GM12878 (cell line): ENCODE measurements at regions of chr18 and their contacts with region 1.

Region 1: GRCh38 chr18:31685097-31686082 is 1.0 kb upstream of the B4GALT6 start:
- DNase-seq: peak; percentile 40
- ATAC-seq: peak; percentile 71
- H3K4me3 ChIP-seq: peak overlapping the region; percentile 75
- H3K27ac ChIP-seq: peak overlapping the region; percentile 88
- H3K4me1 ChIP-seq: peaks cover 13% of the 10 kb centered on the region
- H3K27me3 ChIP-seq: no peaks in the 10 kb centered on the region
- CTCF ChIP-seq: peak; percentile 42 to 48 (median 47); a peak in 4 of 6 replicates
- EP300 ChIP-seq: no peak
- POLR2A ChIP-seq: peak; percentile 79
- RAD21 ChIP-seq: 0 out of 2 replicates have a peak, but pooled peaks have one; percentile 15

Region 2: GRCh38 chr18:31490387-31490786 is 195.0 kb before region 1 on chr18:
- CTCF ChIA-PET with region 1: no interaction called
- POLR2A ChIA-PET with region 1: no interaction called
- RAD21 ChIA-PET with region 1: no interaction called
- SMC1A ChIA-PET with region 1: no interaction called
- in situ Hi-C with region 1: no loop called
- intact Hi-C with region 1: no loop called
- DNase-seq: peak; percentile 49
- ATAC-seq: peak; percentile 92
- H3K4me3 ChIP-seq: no peak overlapping the region
- H3K27ac ChIP-seq: peak overlapping the region; percentile 9; the same call in 1 of the 2 replicates
- H3K4me1 ChIP-seq: peaks cover 7% of the 10 kb centered on the region
- H3K27me3 ChIP-seq: no peaks in the 10 kb centered on the region
- CTCF ChIP-seq: no peak
- EP300 ChIP-seq: peak; percentile 69 to 85; a peak in 3 of 4 replicates
- POLR2A ChIP-seq: no peak
- RAD21 ChIP-seq: no peak

Region 3: GRCh38 chr18:31634331-31634713 is 51.1 kb before region 1 on chr18:
- CTCF ChIA-PET with region 1: interaction called, 3 read pairs
- POLR2A ChIA-PET with region 1: interaction called, 4 read pairs
- RAD21 ChIA-PET with region 1: interaction called, 4 read pairs
- SMC1A ChIA-PET with region 1: interaction called, 18 read pairs
- in situ Hi-C with region 1: no loop called
- intact Hi-C with region 1: no loop called
- DNase-seq: peak; percentile 85
- ATAC-seq: peak; percentile 98
- H3K4me3 ChIP-seq: no peak overlapping the region
- H3K27ac ChIP-seq: peak overlapping the region; percentile 70
- H3K4me1 ChIP-seq: peaks cover 35% of the 10 kb centered on the region
- H3K27me3 ChIP-seq: no peaks in the 10 kb centered on the region
- CTCF ChIP-seq: no peak
- EP300 ChIP-seq: peak in 1 of 2 experiments; percentile 51; a peak in 1 of 4 replicates
- POLR2A ChIP-seq: no peak
- RAD21 ChIP-seq: peak; percentile 22; the same call in 1 of the 2 replicates

Region 4: GRCh38 chr18:31667185-31667584 is 18.2 kb before region 1 on chr18:
- CTCF ChIA-PET with region 1: interaction called, 13 read pairs
- POLR2A ChIA-PET with region 1: interaction called, 8 read pairs
- RAD21 ChIA-PET with region 1: interaction called, 4 read pairs
- SMC1A ChIA-PET with region 1: interaction called, 169 read pairs
- in situ Hi-C with region 1: no loop called
- intact Hi-C with region 1: no loop called
- DNase-seq: no peak
- ATAC-seq: no peak
- H3K4me3 ChIP-seq: no peak overlapping the region
- H3K27ac ChIP-seq: no peak overlapping the region
- H3K4me1 ChIP-seq: no peaks in the 10 kb centered on the region
- H3K27me3 ChIP-seq: no peaks in the 10 kb centered on the region
- CTCF ChIP-seq: no peak
- EP300 ChIP-seq: no peak
- POLR2A ChIP-seq: no peak
- RAD21 ChIP-seq: no peak

Region 5: GRCh38 chr18:31672628-31673135 is 12.7 kb before region 1 on chr18:
- CTCF ChIA-PET with region 1: interaction called, 5 read pairs
- POLR2A ChIA-PET with region 1: interaction called, 8 read pairs
- RAD21 ChIA-PET with region 1: interaction called, 4 read pairs
- SMC1A ChIA-PET with region 1: interaction called, 18 read pairs
- in situ Hi-C with region 1: no loop called
- intact Hi-C with region 1: no loop called
- DNase-seq: no peak
- ATAC-seq: peak; percentile 15; the same call in 2 of the 3 replicates
- H3K4me3 ChIP-seq: peak overlapping the region; percentile 25; the same call in 1 of the 2 replicates
- H3K27ac ChIP-seq: peak overlapping the region; percentile 54
- H3K4me1 ChIP-seq: peaks cover 10% of the 10 kb centered on the region
- H3K27me3 ChIP-seq: no peaks in the 10 kb centered on the region
- CTCF ChIP-seq: no peak
- EP300 ChIP-seq: no peak
- POLR2A ChIP-seq: no peak
- RAD21 ChIP-seq: no peak